ENCODE measurements at regions of chr12 and their contacts with region 1.

Region 1: GRCh38 chr12:5171701-5172100 is 128.0 kb downstream of the KCNA5 start:
- DNase-seq: no peak
- H3K4me3 ChIP-seq: no peak overlapping the region
- H3K27ac ChIP-seq: peak overlapping the region in 1 of 2 donors; percentile 39
- H3K4me1 ChIP-seq: peaks cover 0 to 7% of the 10 kb centered on the region in 2 donors
- H3K27me3 ChIP-seq: no peaks in the 10 kb centered on the region
- CTCF ChIP-seq: peak; percentile 35 to 62 (median 52)

Region 2: DNA sequence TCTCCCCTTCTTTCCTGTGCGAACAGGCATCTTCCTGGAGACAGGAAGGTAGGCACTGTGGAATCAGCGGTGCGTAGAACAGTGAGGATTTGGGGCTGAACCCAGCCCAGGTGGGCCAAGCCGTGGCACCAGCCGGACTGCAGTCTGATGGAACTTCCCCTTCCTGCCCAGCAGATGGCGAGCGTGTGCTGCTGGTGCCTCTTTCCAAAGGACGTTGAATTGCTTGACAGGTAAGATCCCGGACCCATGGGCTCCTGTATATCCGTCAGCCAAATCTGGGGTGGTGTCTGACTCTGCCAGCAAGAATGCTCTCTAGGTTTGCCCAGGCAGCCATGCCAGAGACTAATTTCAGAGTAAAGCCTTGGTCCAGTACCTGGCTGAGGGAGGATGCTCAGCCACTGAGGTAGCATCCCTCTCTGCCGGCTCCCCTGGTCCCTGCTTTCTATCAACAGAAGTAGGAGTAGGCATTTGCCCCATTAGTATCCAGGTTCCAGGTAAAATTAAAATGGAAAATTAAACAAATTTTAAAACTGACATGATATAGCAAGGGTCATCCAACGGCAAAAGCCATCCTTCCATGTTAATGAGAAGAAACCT is 149.1 kb before region 1 on chr12:
- intact Hi-C with region 1: loop called (anchors 2 kb)
- DNase-seq: no peak
- H3K4me3 ChIP-seq: no peak overlapping the region
- H3K27ac ChIP-seq: no peak overlapping the region
- H3K4me1 ChIP-seq: peaks cover 0 to 10% of the 10 kb centered on the region in 2 donors
- H3K27me3 ChIP-seq: no peaks in the 10 kb centered on the region
- CTCF ChIP-seq: peak; percentile 89 to 95 (median 92)

Region 3: DNA sequence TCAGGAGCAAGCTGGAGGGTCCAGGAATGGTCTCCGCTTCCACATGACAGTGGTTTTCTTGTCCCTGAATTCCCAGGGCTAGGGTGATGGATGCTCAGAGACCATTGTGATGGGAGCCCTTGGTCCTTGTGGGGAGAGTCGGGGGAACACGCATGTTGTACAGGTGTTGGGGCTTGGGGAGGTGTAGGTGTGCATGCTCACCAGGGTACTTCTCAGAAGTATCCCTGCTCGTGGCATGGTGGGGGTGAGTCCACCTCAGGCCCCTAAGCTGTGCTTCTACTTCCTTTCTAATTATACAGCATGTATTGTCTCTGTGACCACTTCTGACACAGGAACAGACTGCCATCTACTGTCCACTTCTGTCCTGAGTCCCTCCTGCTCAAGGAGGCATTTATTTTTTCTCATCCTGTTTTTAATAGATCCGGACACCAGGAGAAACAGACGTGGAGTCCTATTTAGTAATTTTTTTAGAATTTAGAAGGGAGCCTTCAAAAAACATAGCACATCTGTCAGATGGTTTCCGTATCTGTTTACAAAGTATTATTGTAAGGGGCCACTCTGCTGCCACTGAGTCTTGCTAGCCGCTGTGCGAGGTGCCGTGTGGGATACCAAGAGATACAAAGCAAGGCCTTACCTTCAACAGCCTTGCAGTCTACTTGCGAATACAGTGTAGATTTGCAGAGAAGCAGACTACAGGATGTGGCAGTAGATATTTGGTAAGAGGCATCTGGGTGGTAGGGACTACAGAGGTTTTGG is 270.7 kb after region 1 on chr12:
- intact Hi-C with region 1: loop called (anchors 5 kb)
- DNase-seq: peak in 1 of 2 donors; percentile 59
- H3K4me3 ChIP-seq: no peak overlapping the region
- H3K27ac ChIP-seq: no peak overlapping the region
- H3K4me1 ChIP-seq: peaks cover 2 to 19% of the 10 kb centered on the region in 2 donors
- H3K27me3 ChIP-seq: no peaks in the 10 kb centered on the region
- CTCF ChIP-seq: peak; percentile 44 to 71 (median 50)

Region 4: DNA sequence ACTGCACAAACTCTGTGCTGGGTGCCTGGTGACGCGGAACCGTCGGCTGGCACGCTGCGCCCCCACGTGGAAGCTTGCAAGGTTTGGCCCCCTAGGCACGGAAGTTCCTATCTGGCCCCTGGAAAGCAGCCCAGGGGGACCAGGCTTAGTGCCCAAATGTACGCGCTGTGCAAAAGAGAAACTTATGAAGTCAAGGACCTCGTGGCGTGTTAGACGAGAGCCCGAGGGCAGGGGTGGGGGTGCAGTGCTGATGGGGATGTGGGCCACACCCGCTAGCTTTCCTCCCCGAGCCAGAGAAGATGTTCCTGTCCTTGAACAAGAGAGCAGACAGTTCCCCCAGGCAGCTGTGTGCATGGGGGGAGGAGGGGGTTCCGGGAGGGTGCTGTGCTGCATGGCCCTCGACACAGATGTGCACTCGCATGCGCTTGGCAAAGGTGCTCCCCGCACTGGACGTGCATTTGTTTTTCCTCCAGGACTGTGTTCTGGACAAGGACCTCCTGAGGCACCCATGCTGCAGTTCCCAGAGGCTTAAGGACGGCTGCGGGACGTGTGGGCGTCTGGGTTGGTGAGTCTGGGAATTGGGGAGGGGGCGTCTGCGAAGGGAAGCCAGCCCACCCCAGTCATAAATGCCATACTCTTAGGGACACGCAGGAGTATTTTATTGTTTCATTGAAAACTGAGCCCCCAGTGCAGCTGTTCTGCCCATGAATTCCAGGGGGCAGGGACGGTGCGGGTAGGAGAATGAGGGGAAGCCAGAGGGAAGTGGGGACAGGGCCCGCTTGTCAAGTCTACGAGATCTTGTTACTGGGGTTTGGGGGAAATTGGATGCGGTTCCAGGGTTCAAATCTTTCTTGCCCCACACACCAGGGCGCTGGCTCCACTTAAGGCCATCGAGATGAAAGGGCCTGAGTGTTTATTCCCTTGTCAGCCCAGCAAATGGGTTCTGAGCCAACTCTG is 340.2 kb after region 1 on chr12:
- intact Hi-C with region 1: loop called (anchors 10 kb)
- DNase-seq: peak in 1 of 2 donors; percentile 72
- H3K4me3 ChIP-seq: peak overlapping the region in 1 of 2 donors; percentile 28
- H3K27ac ChIP-seq: no peak overlapping the region
- H3K4me1 ChIP-seq: no peaks in the 10 kb centered on the region
- H3K27me3 ChIP-seq: no peaks in the 10 kb centered on the region
- CTCF ChIP-seq: peak; percentile 50 to 88 (median 71)

Measured in ascending aorta (tissue), 2 donors.